ENCODE measurements at regions of chr13 and their contacts with region 1.

Region 1: GRCh38 chr13:19587635-19588300 is 26.4 kb upstream of the TPTE2 start:
- DNase-seq: peak; percentile 55 to 80 (median 76)
- H3K4me3 ChIP-seq: peak overlapping the region in 2 of 7 experiments; percentile 50 to 65
- H3K27ac ChIP-seq: no peak overlapping the region
- H3K4me1 ChIP-seq: peaks cover 3 to 21% (median 17%) of the 10 kb centered on the region in 4 experiments
- H3K27me3 ChIP-seq: no peaks in the 10 kb centered on the region

Region 2: DNA sequence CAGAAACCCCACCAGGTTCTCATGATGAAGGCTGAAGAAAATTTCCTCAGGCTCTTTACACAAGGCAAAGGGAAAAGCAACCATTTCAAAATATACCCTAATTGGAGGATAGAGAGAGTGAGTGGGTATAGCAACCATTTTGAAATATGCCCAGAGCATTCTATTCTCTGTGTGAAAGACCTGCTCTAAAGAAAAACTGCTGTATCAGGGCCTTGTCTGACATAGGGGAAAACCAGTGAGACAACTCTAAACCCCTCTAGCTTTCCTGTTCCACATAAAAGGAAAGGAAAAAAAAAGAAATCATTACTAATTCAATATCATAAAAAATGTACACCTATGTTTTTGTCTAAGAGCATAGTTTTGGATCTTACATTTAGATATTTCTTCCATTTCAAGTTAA is 68.7 kb before region 1 on chr13:
- CTCF ChIA-PET with region 1: no interaction called
- POLR2A ChIA-PET with region 1: no interaction called
- DNase-seq: no peak
- H3K4me3 ChIP-seq: no peak overlapping the region
- H3K27ac ChIP-seq: no peak overlapping the region
- H3K4me1 ChIP-seq: no peaks in the 10 kb centered on the region
- H3K27me3 ChIP-seq: no peaks in the 10 kb centered on the region

Region 3: DNA sequence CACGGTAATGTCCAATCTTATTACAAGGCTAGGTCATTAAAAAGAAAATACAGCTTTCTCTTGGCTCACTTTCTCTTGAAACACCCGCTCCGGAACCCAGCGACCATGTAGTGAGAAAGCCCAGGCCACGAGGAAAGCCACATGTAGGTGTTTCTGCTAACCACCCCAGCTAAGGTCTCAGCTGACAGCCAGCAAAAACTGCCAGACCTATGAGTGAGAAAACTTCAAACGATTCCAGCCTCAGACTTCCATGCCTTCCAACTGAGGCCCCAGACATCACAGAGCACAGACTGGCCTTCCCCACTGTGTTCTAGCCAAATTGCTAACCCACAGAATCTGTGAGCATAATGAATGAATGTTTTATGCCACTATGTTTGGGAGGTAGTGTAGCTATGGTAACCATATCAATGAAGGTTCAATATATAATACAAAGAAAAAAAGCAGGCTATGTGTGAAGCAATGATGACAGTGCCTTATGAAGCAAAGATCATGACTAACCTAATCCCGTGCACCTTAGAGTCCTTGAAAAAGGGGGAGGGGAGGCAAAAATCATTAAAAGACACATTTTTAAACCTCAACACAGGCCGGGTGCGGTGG is 14.6 kb before region 1 on chr13:
- CTCF ChIA-PET with region 1: interaction called, 12 read pairs
- POLR2A ChIA-PET with region 1: no interaction called
- DNase-seq: no peak
- H3K4me3 ChIP-seq: no peak overlapping the region
- H3K27ac ChIP-seq: no peak overlapping the region
- H3K4me1 ChIP-seq: no peaks in the 10 kb centered on the region
- H3K27me3 ChIP-seq: no peaks in the 10 kb centered on the region

Region 4: GRCh38 chr13:19726611-19727010 is 138.8 kb after region 1 on chr13:
- CTCF ChIA-PET with region 1: no interaction called
- POLR2A ChIA-PET with region 1: no interaction called
- DNase-seq: no peak
- H3K4me3 ChIP-seq: no peak overlapping the region
- H3K27ac ChIP-seq: no peak overlapping the region
- H3K4me1 ChIP-seq: no peaks in the 10 kb centered on the region
- H3K27me3 ChIP-seq: no peaks in the 10 kb centered on the region